Heart left ventricle (tissue), 16 donors: ENCODE measurements at regions of chr10 and their contacts with region 1.

Region 1: GRCh38 chr10:31318854-31319601 is at the start of gene ZEB1:
- DNase-seq: peak; percentile 86 to 95 (median 91)
- ATAC-seq: peak; percentile 33 to 78 (median 68)
- H3K4me3 ChIP-seq: peak within 1 kb of the TSS; percentile 66 to 96 (median 90)
- H3K27ac ChIP-seq: peak within 1 kb of the TSS; percentile 91 to 99 (median 98)
- H3K4me1 ChIP-seq: peaks cover 0 to 46% (median 17%) of the 10 kb centered on the region in 12 donors
- H3K27me3 ChIP-seq: no peaks in the 10 kb centered on the region
- CTCF ChIP-seq: peak; percentile 23 to 70 (median 56)
- POLR2A ChIP-seq: no peak
- total RNA-seq, gene ZEB1: 74.0 to 135 (median 95.9) TPM

Region 2: GRCh38 chr10:30751678-30752331 is 567.2 kb before region 1 on chr10:
- intact Hi-C with region 1: loop called in 1 of 10 experiments (anchors 10 kb)
- DNase-seq: peak in 4 of 5 donors; percentile 69 to 84 (median 80)
- ATAC-seq: peak; percentile 64 to 87 (median 77)
- H3K4me3 ChIP-seq: no peak overlapping the region
- H3K27ac ChIP-seq: peak overlapping the region in 9 of 12 donors; percentile 3 to 68 (median 34)
- H3K4me1 ChIP-seq: peaks cover 0 to 23% (median 6%) of the 10 kb centered on the region in 12 donors
- H3K27me3 ChIP-seq: no peaks in the 10 kb centered on the region
- CTCF ChIP-seq: peak in 11 of 12 donors; percentile 12 to 97 (median 91)
- POLR2A ChIP-seq: no peak

Region 3: DNA sequence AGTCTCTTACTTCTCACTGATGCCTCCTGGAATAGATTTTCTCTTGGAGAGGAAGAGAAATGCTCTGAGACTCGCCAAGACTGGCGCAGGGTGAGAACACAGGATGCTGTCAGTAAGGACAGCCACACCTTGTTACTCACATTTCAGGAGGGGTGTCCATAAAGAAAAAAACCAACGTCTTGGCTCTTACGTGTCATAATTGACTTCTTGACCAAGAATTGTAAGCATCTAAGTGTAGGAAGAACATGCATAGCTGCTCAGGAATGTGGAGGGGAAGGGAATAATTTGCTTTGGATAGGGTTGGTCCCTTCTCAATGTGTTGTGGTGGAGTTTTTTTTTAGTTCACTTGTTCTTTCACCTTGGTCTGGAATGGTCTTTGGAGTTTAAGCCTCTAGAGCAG is 243.6 kb before region 1 on chr10:
- intact Hi-C with region 1: loop called in 2 of 10 experiments (anchors 5 to 10 kb)
- DNase-seq: no peak
- ATAC-seq: peak in 3 of 4 donors; percentile 35 to 37 (median 36)
- H3K4me3 ChIP-seq: no peak overlapping the region
- H3K27ac ChIP-seq: peak overlapping the region in 5 of 12 donors; percentile 16 to 56 (median 38)
- H3K4me1 ChIP-seq: peaks cover 0 to 49% (median 7%) of the 10 kb centered on the region in 12 donors
- H3K27me3 ChIP-seq: no peaks in the 10 kb centered on the region
- CTCF ChIP-seq: no peak
- POLR2A ChIP-seq: no peak

Region 4: DNA sequence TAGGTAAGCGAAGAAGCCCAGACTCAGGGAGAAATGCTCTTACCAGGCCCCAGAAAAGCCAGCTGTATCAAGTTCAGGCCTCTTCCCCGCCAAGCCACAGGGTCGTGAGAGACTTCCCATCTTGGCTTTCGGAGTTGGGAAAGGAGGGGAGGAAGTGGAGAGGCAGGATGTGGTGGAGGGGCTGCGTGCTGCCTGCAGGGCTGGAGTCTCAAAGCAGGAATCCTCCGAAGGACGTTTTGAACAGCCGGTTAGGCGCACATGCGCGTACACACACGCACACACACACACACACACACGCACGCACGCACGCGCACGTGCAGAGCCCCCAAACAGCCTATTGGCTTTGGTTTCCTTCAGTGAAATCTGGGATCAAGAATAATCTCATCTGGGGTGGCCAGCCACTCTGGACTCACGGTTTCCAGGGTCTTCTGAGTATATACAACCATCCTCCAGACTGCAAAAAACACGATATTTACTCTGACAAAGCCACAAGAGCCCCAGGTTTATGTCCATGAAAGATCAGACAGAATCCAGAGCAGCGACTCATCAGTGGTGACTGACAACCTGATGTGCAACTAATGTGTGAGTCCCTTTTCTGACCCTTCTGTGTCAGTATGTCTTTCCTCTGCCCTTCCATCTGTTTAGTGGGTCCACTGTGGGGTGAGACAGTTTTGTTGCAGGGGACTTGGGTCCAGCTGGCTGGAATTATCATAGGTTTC is 172.4 kb before region 1 on chr10:
- intact Hi-C with region 1: loop called in 2 of 10 experiments (anchors 5 to 10 kb)
- DNase-seq: peak; percentile 74 to 82 (median 79)
- ATAC-seq: peak; percentile 69 to 89 (median 78)
- H3K4me3 ChIP-seq: peak overlapping the region in 4 of 12 donors; percentile 4 to 31 (median 6)
- H3K27ac ChIP-seq: peak overlapping the region in 11 of 12 donors; percentile 20 to 82 (median 68)
- H3K4me1 ChIP-seq: peaks cover 0 to 41% (median 18%) of the 10 kb centered on the region in 12 donors
- H3K27me3 ChIP-seq: no peaks in the 10 kb centered on the region
- CTCF ChIP-seq: no peak
- POLR2A ChIP-seq: no peak

Region 5: GRCh38 chr10:31426401-31426800 is 107.4 kb after region 1 on chr10:
- intact Hi-C with region 1: loop called in 1 of 10 experiments (anchors 5 kb)
- DNase-seq: peak in 1 of 5 donors; percentile 52
- ATAC-seq: peak; percentile 75 to 90 (median 85)
- H3K4me3 ChIP-seq: no peak overlapping the region
- H3K27ac ChIP-seq: peak overlapping the region; percentile 40 to 83 (median 70)
- H3K4me1 ChIP-seq: peaks cover 17 to 62% (median 47%) of the 10 kb centered on the region in 12 donors
- H3K27me3 ChIP-seq: no peaks in the 10 kb centered on the region
- CTCF ChIP-seq: no peak
- POLR2A ChIP-seq: no peak

Region 6: GRCh38 chr10:31490858-31491504 is 172.0 kb after region 1 on chr10:
- intact Hi-C with region 1: loop called in 5 of 10 experiments (anchors 2 to 10 kb)
- DNase-seq: no peak
- ATAC-seq: peak in 3 of 4 donors; percentile 53 to 73 (median 53)
- H3K4me3 ChIP-seq: no peak overlapping the region
- H3K27ac ChIP-seq: no peak overlapping the region
- H3K4me1 ChIP-seq: peaks cover 0 to 4% (median 0%) of the 10 kb centered on the region in 12 donors
- H3K27me3 ChIP-seq: no peaks in the 10 kb centered on the region
- CTCF ChIP-seq: peak; percentile 38 to 70 (median 57)
- POLR2A ChIP-seq: no peak

Region 7: GRCh38 chr10:31707093-31708039 is 388.3 kb after region 1 on chr10:
- intact Hi-C with region 1: loop called in 1 of 10 experiments (anchors 5 kb)
- DNase-seq: peak; percentile 84 to 86 (median 84)
- ATAC-seq: peak; percentile 72 to 92 (median 90)
- H3K4me3 ChIP-seq: peak overlapping the region in 9 of 12 donors; percentile 7 to 41 (median 31)
- H3K27ac ChIP-seq: peak overlapping the region; percentile 74 to 97 (median 87)
- H3K4me1 ChIP-seq: peaks cover 0 to 64% (median 41%) of the 10 kb centered on the region in 12 donors
- H3K27me3 ChIP-seq: no peaks in the 10 kb centered on the region
- CTCF ChIP-seq: no peak
- POLR2A ChIP-seq: no peak